SK-N-SH (cell line): ENCODE measurements at regions of chr18 and their contacts with region 1.

Region 1: GRCh38 chr18:34122724-34123334 is 101.9 kb downstream of the NOL4 start:
- DNase-seq: peak; percentile 55
- H3K4me3 ChIP-seq: peak overlapping the region in 1 of 2 experiments; percentile 21; a peak in 1 of 4 replicates
- H3K27ac ChIP-seq: no peak overlapping the region
- H3K4me1 ChIP-seq: peaks cover 1 to 3% of the 10 kb centered on the region in 2 experiments; a peak in 2 of 4 replicates
- H3K27me3 ChIP-seq: no peaks in the 10 kb centered on the region
- CTCF ChIP-seq: peak; percentile 97
- EP300 ChIP-seq: no peak
- RAD21 ChIP-seq: peak; percentile 91

Region 2: GRCh38 chr18:33839441-33840211 is 283.2 kb before region 1 on chr18:
- CTCF ChIA-PET with region 1: interaction called, 34 read pairs
- POLR2A ChIA-PET with region 1: no interaction called
- DNase-seq: peak; percentile 46
- H3K4me3 ChIP-seq: no peak overlapping the region; a peak in 1 of 4 replicates
- H3K27ac ChIP-seq: no peak overlapping the region
- H3K4me1 ChIP-seq: no peaks in the 10 kb centered on the region; a peak in 1 of 4 replicates
- H3K27me3 ChIP-seq: no peaks in the 10 kb centered on the region
- CTCF ChIP-seq: peak; percentile 83
- EP300 ChIP-seq: no peak
- RAD21 ChIP-seq: peak; percentile 81

Region 3: DNA sequence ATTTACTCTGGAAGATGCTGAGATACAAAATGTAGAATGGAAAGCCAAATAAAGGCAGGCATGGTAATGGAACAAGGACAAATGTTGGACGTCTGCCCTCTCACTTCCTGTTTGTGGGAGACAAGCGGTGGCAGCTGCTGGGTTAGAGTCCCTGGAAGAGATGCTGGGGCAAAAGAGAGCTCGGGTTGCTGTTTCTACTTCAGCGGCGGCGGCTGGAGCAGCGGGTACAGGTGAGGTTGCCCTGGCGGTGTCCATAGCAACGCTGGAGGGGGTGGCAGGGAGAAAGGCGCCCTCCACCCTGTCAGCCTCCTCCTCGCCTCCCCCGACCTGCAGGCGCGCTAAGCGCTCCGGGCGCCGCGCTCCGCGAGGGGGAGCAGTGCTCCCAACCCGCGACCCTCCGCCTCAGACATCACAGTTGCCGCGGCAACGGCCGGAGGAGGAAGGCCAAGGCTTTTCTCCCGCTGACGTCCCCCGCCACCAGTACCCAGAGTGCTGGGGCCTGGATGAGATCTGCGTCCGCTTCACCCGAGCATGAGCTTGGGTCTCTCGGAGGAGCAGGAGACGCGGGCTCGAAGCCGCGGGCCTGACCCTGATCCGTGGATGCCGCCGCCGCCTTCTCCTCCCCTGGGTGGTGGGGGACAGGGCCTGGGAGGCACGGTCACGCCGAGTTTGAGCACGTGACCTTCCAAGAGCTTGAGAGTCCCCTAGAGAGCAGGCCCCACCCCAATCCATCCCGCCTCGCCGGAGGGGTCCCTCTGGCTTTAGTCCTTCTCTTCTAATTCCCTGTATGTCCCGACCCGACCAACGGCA is 36.3 kb after region 1 on chr18:
- CTCF ChIA-PET with region 1: interaction called, 28 read pairs
- POLR2A ChIA-PET with region 1: no interaction called
- DNase-seq: peak; percentile 87
- H3K4me3 ChIP-seq: peak overlapping the region; percentile 51; a peak in 3 of 4 replicates
- H3K27ac ChIP-seq: peak overlapping the region in 1 of 2 experiments; percentile 96; a peak in 2 of 4 replicates
- H3K4me1 ChIP-seq: peaks cover 10 to 12% of the 10 kb centered on the region in 2 experiments; a peak in 3 of 4 replicates
- H3K27me3 ChIP-seq: peaks cover 11% of the 10 kb centered on the region; the same call in 1 of the 2 replicates
- CTCF ChIP-seq: peak; percentile 35
- EP300 ChIP-seq: 0 out of 4 replicates have a peak, but pooled peaks of 1 of the 2 experiments have one; percentile 21
- RAD21 ChIP-seq: peak; percentile 47

Region 4: GRCh38 chr18:34224423-34225217 is 101.8 kb after region 1 on chr18 and contains the start of gene NOL4:
- CTCF ChIA-PET with region 1: interaction called, 49 read pairs
- POLR2A ChIA-PET with region 1: interaction called, 5 read pairs
- DNase-seq: peak; percentile 89
- H3K4me3 ChIP-seq: peak within 1 kb of the TSS; percentile 58 to 63
- H3K27ac ChIP-seq: peak within 1 kb of the TSS in 1 of 2 experiments; percentile 97; a peak in 2 of 4 replicates
- H3K4me1 ChIP-seq: peaks cover 0 to 3% of the 10 kb centered on the region in 2 experiments; a peak in 1 of 4 replicates
- H3K27me3 ChIP-seq: peaks cover 37% of the 10 kb centered on the region
- CTCF ChIP-seq: no peak
- EP300 ChIP-seq: no peak
- RAD21 ChIP-seq: peak; percentile 46; the same call in 1 of the 2 replicates
- polyA plus RNA-seq, gene NOL4: 0.07 and 0.49 TPM in 2 replicates

Region 5: GRCh38 chr18:34352385-34353163 is 229.7 kb after region 1 on chr18:
- CTCF ChIA-PET with region 1: interaction called, 10 read pairs
- POLR2A ChIA-PET with region 1: no interaction called
- DNase-seq: peak; percentile 26
- H3K4me3 ChIP-seq: no peak overlapping the region
- H3K27ac ChIP-seq: no peak overlapping the region
- H3K4me1 ChIP-seq: no peaks in the 10 kb centered on the region; a peak in 1 of 4 replicates
- H3K27me3 ChIP-seq: no peaks in the 10 kb centered on the region
- CTCF ChIP-seq: peak; percentile 33
- EP300 ChIP-seq: no peak
- RAD21 ChIP-seq: peak; percentile 73

Region 6: GRCh38 chr18:34494359-34494696 is 371.5 kb after region 1 on chr18:
- CTCF ChIA-PET with region 1: no interaction called
- POLR2A ChIA-PET with region 1: no interaction called
- DNase-seq: no peak
- H3K4me3 ChIP-seq: peak overlapping the region in 1 of 2 experiments; percentile 53; a peak in 1 of 4 replicates
- H3K27ac ChIP-seq: no peak overlapping the region
- H3K4me1 ChIP-seq: no peaks in the 10 kb centered on the region; a peak in 2 of 4 replicates
- H3K27me3 ChIP-seq: no peaks in the 10 kb centered on the region
- CTCF ChIP-seq: no peak
- EP300 ChIP-seq: no peak
- RAD21 ChIP-seq: no peak